ENCODE measurements at regions of chr10 and their contacts with region 1.

Region 1: GRCh38 chr10:11515596-11516430 is 95.6 kb downstream of the USP6NL start:
- DNase-seq: no peak
- ATAC-seq: peak; percentile 92

Region 2: GRCh38 chr10:10520491-10521385 is 995.1 kb before region 1 on chr10:
- intact Hi-C with region 1: no loop called
- DNase-seq: no peak
- ATAC-seq: no peak

Region 3: DNA sequence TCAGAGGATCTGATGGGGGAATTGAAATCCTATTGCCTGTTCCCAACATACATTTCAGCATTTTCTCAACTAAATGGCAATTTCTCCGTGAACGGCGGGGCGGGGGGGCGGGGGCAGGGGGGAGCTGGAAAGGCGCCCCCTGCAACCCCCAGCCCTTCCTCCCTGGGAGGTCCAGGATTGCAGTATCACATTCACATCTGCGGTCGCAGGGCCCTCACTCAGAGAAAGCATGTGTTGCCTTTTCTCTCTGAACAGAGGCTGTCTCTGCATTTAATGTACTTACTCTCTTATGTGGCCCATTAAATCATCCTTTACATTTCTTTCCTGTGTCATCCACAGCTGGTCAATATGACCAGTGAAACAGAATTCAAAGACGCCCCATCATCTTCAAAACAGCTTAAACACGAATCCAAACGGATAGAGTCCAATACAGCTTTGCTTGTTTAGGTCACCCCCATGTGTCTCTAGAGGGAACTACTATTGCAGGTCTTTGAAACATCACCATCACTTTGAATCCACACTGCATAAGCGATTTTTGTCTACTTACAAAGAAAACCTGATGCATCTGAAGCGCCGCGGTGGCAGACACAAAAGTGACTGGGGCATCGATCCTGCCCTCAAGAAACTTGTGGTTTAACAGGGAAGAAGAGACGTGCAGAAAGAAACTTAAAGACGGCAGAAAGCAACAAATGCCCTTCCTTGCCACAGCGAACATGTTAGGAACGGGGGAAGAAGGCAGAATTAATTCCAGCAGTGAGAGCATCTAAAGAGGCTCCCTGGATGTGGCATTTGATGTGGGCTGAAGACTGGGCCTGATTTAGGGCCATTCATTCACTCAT is 209.3 kb after region 1 on chr10:
- intact Hi-C with region 1: loop called (anchors 5 kb)
- DNase-seq: peak; percentile 47
- ATAC-seq: peak; percentile 86